ENCODE measurements at regions of chr7 and their contacts with region 1.

Region 1: GRCh38 chr7:20310963-20311742 is 19.5 kb upstream of the ITGB8 start:
- DNase-seq: no peak
- ATAC-seq: no peak
- H3K4me3 Mint-ChIP-seq: no peak overlapping the region
- H3K27ac Mint-ChIP-seq: no peak overlapping the region
- H3K4me1 Mint-ChIP-seq: no peaks in the 10 kb centered on the region
- H3K27me3 Mint-ChIP-seq: no peaks in the 10 kb centered on the region

Region 2: DNA sequence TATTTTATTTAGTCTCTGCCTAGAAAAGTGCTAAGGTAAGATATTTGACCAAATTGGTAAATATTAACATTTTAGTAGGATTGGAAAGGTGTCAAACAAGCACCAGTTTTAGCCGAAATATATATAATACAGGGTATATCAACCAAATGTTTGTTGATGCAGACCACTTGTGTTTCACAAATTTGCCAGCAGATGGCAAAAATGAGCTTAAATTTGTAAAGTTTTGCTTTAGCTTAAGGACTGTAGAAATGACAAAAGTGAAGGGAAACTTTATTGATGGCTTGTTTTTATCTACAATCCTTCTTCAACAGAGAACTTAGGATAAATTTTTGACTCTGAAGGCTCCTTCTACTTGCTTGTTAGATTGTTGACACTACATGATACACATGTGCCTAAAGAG is 597.5 kb before region 1 on chr7:
- CTCF ChIA-PET with region 1: interaction called, 8 read pairs
- POLR2A ChIA-PET with region 1: no interaction called
- intact Hi-C with region 1: loop called in 1 of 2 experiments (anchors 5 kb)
- DNase-seq: peak; percentile 55
- ATAC-seq: no peak
- H3K4me3 Mint-ChIP-seq: no peak overlapping the region
- H3K27ac Mint-ChIP-seq: no peak overlapping the region
- H3K4me1 Mint-ChIP-seq: peaks cover 15% of the 10 kb centered on the region
- H3K27me3 Mint-ChIP-seq: no peaks in the 10 kb centered on the region

Region 3: GRCh38 chr7:19754521-19755116 is 556.5 kb before region 1 on chr7:
- CTCF ChIA-PET with region 1: interaction called, 3 read pairs
- POLR2A ChIA-PET with region 1: no interaction called
- intact Hi-C with region 1: loop called (anchors 2 to 10 kb)
- DNase-seq: no peak
- ATAC-seq: no peak
- H3K4me3 Mint-ChIP-seq: no peak overlapping the region
- H3K27ac Mint-ChIP-seq: no peak overlapping the region
- H3K4me1 Mint-ChIP-seq: no peaks in the 10 kb centered on the region
- H3K27me3 Mint-ChIP-seq: peaks cover 11% of the 10 kb centered on the region

Region 4: GRCh38 chr7:19982841-19983835 is 328.0 kb before region 1 on chr7:
- CTCF ChIA-PET with region 1: no interaction called
- POLR2A ChIA-PET with region 1: no interaction called
- intact Hi-C with region 1: loop called in 1 of 2 experiments (anchors 5 kb)
- DNase-seq: peak; percentile 29
- ATAC-seq: no peak
- H3K4me3 Mint-ChIP-seq: no peak overlapping the region
- H3K27ac Mint-ChIP-seq: no peak overlapping the region
- H3K4me1 Mint-ChIP-seq: no peaks in the 10 kb centered on the region
- H3K27me3 Mint-ChIP-seq: no peaks in the 10 kb centered on the region

Region 5: GRCh38 chr7:20350518-20350951 is 39.4 kb after region 1 on chr7:
- CTCF ChIA-PET with region 1: no interaction called
- POLR2A ChIA-PET with region 1: no interaction called
- intact Hi-C with region 1: no loop called
- DNase-seq: no peak
- ATAC-seq: no peak
- H3K4me3 Mint-ChIP-seq: no peak overlapping the region
- H3K27ac Mint-ChIP-seq: no peak overlapping the region
- H3K4me1 Mint-ChIP-seq: no peaks in the 10 kb centered on the region
- H3K27me3 Mint-ChIP-seq: peaks cover 2% of the 10 kb centered on the region

Region 6: DNA sequence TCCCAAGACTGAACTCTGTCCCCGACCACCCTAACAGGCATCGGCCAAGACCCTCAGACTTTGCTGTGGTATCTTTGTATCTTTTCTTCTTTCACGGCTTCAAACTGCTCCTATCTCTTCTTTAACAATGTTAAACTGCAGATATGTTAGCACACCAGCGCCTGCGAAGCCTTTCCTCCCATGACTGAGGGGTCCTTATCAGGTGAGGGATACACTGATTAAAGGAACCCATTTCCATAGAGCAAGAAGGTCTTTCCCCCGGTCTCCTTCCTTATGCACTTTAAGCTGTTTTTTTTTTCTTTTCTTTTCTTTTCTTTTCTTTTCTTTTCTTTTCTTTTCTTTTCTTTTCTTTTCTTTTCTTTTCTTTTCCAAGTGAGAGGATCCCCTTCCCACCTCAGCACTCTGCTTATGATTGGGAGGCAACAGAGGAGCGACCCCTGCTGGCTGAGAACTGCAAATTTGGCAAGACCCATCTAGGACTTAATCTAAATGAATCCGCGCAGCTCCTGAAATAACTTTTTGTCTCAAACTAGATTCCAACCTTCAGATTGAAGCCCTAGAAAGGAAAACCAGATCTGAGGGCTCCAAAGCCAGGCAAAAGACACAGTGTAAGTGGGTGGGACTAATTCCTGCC is 129.4 kb after region 1 on chr7:
- CTCF ChIA-PET with region 1: no interaction called
- POLR2A ChIA-PET with region 1: no interaction called
- intact Hi-C with region 1: no loop called
- DNase-seq: peak; percentile 51
- ATAC-seq: no peak
- H3K4me3 Mint-ChIP-seq: no peak overlapping the region
- H3K27ac Mint-ChIP-seq: no peak overlapping the region
- H3K4me1 Mint-ChIP-seq: no peaks in the 10 kb centered on the region
- H3K27me3 Mint-ChIP-seq: no peaks in the 10 kb centered on the region

Region 7: DNA sequence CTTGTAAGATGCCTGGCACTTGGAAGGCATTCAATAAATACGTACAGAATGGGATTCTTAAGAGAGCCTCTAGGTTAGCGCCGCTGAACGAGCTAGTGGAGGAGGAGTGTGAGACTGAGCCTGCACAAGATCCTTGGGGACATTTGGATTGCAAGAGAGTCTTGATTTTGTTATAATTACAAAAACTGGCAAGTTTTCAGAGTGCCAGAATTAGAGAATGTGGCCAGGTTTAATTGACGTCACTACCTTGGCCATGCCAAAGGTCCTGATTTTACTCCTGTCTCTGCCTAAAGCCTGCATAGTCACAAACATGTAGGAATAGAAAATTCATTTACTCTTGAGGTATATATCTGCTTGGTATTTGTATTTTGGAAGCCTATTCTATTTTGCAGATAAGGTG is 1261.8 kb after region 1 on chr7:
- CTCF ChIA-PET with region 1: no interaction called
- POLR2A ChIA-PET with region 1: no interaction called
- intact Hi-C with region 1: no loop called
- DNase-seq: no peak
- ATAC-seq: no peak
- H3K4me3 Mint-ChIP-seq: no peak overlapping the region
- H3K27ac Mint-ChIP-seq: no peak overlapping the region
- H3K4me1 Mint-ChIP-seq: no peaks in the 10 kb centered on the region
- H3K27me3 Mint-ChIP-seq: peaks cover 6% of the 10 kb centered on the region